ENCODE measurements at regions of chr1 and their contacts with region 1.

Region 1: DNA sequence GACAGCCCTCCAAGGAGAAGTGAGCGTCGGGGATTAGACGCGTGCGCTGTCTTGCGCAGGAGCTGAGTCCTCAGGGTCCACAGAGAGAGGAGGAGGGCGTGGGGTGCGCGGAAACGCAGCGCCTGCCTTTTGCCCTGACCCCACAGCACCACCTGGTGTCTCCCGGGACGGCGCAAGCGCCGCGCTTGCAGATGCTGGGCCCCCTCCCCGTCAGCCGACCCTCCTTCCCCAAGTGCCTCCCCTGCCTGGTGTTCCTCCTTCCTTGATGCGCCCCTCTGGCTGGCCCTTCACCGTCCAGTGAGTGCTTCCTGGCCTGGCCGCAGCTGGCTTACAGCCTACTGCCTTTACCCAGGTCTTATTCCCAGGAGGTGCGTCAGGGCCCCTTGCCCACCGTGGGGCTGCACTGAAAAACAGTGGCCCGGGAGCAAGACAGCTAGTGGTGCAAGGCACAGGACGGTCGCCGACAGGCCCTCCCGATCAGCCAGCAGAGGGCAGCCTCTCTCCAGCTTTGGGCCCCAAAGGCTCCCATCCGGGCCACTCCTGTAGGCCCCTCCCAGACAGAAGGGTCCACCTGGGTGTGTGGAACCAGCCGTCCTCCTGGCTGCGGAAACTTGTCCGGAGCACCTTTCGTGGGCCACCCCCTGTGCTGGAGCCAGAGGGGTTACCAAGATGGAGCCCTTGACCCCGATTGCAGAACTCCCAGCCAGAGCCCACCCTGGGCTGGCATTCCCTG is 12.9 kb upstream of the PHLDA3 start:
- DNase-seq: peak; percentile 73
- ATAC-seq: peak; percentile 76
- H3K4me3 Mint-ChIP-seq: peak overlapping the region; percentile 81
- H3K27ac Mint-ChIP-seq: no peak overlapping the region
- H3K4me1 Mint-ChIP-seq: peaks cover 29% of the 10 kb centered on the region
- H3K27me3 Mint-ChIP-seq: no peaks in the 10 kb centered on the region
- CTCF ChIP-seq: no peak

Region 2: GRCh38 chr1:201436393-201436792 is 45.5 kb before region 1 on chr1:
- CTCF ChIA-PET with region 1: interaction called, 3 read pairs
- POLR2A ChIA-PET with region 1: interaction called, 4 read pairs
- intact Hi-C with region 1: loop called (anchors 1 kb)
- DNase-seq: no peak
- ATAC-seq: no peak
- H3K4me3 Mint-ChIP-seq: no peak overlapping the region
- H3K27ac Mint-ChIP-seq: no peak overlapping the region
- H3K4me1 Mint-ChIP-seq: peaks cover 5% of the 10 kb centered on the region
- H3K27me3 Mint-ChIP-seq: peaks cover 31% of the 10 kb centered on the region
- CTCF ChIP-seq: no peak

Region 3: GRCh38 chr1:201447911-201448871 is 33.7 kb before region 1 on chr1:
- CTCF ChIA-PET with region 1: interaction called, 33 read pairs
- POLR2A ChIA-PET with region 1: interaction called, 4 read pairs
- intact Hi-C with region 1: loop called (anchors 1 kb)
- DNase-seq: peak; percentile 30
- ATAC-seq: peak; percentile 89
- H3K4me3 Mint-ChIP-seq: no peak overlapping the region
- H3K27ac Mint-ChIP-seq: no peak overlapping the region
- H3K4me1 Mint-ChIP-seq: peaks cover 9% of the 10 kb centered on the region
- H3K27me3 Mint-ChIP-seq: peaks cover 12% of the 10 kb centered on the region
- CTCF ChIP-seq: no peak

Region 4: GRCh38 chr1:201506556-201507359 is 24.8 kb after region 1 on chr1 and contains the start of gene CSRP1:
- CTCF ChIA-PET with region 1: interaction called, 219 read pairs
- POLR2A ChIA-PET with region 1: interaction called, 16 read pairs
- intact Hi-C with region 1: loop called (anchors 1 kb)
- DNase-seq: peak; percentile 66
- ATAC-seq: peak; percentile 96
- H3K4me3 Mint-ChIP-seq: peak within 1 kb of the TSS; percentile 88
- H3K27ac Mint-ChIP-seq: peak within 1 kb of the TSS; percentile 76
- H3K4me1 Mint-ChIP-seq: peaks cover 31% of the 10 kb centered on the region
- H3K27me3 Mint-ChIP-seq: no peaks in the 10 kb centered on the region
- CTCF ChIP-seq: no peak
- total RNA-seq, gene CSRP1: 29.0 and 29.5 TPM in 2 replicates

Region 5: DNA sequence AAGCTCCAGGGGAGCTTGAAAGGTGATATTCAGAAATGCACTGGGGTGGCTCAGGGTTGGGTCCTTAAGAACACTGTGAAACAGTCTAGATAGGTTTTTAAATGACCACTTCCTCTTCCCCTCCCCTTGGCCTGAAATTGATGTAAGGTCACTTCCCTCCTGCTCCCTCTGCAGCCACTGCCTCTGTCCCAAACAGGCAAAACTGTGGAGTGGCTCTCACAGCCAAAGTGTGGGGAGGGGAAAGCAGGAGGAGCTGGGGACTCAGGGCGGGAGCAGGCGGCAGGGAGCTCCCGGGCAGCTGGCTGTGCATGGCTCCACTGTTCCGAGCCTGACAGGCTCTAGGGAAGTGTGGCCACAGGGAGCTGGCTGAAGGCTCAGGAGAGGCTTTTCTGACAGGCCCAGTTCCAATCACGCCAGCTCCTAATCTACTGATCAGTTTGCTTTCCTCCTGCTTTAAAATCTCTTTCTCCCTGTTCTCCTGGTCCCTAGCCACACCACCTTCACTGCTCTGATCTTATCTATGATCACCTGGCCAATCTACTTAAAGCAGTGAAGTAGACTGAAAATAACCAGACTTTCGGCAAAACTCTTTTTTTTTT is 30.1 kb after region 1 on chr1:
- CTCF ChIA-PET with region 1: interaction called, 219 read pairs
- POLR2A ChIA-PET with region 1: interaction called, 16 read pairs
- intact Hi-C with region 1: loop called (anchors 1 kb)
- DNase-seq: no peak
- ATAC-seq: no peak
- H3K4me3 Mint-ChIP-seq: no peak overlapping the region
- H3K27ac Mint-ChIP-seq: no peak overlapping the region
- H3K4me1 Mint-ChIP-seq: peaks cover 19% of the 10 kb centered on the region
- H3K27me3 Mint-ChIP-seq: no peaks in the 10 kb centered on the region
- CTCF ChIP-seq: no peak

Region 6: DNA sequence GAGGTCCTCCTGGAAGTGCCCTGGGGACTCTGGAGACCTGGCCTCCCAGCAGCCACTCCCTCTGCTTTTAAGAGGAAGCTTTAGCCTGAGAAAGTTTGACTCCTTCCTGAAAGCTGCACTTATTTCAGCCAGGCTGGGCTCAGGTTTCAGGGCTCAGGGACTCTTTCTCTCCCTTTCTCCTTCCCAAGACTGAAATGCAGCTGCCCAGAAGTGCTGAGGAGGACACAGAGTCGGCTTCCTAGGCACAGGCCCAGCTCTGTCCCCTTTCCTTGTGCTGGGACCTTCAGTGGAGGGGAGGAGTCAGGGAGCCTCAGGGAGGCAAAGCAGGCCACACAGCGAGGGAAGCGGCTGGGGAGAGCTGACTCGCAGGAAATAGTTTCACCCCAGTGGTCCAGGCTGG is 194.3 kb after region 1 on chr1:
- CTCF ChIA-PET with region 1: no interaction called
- POLR2A ChIA-PET with region 1: no interaction called
- intact Hi-C with region 1: no loop called
- DNase-seq: no peak
- ATAC-seq: no peak
- H3K4me3 Mint-ChIP-seq: no peak overlapping the region
- H3K27ac Mint-ChIP-seq: no peak overlapping the region
- H3K4me1 Mint-ChIP-seq: no peaks in the 10 kb centered on the region
- H3K27me3 Mint-ChIP-seq: peaks cover 6% of the 10 kb centered on the region
- CTCF ChIP-seq: no peak

Region 7: DNA sequence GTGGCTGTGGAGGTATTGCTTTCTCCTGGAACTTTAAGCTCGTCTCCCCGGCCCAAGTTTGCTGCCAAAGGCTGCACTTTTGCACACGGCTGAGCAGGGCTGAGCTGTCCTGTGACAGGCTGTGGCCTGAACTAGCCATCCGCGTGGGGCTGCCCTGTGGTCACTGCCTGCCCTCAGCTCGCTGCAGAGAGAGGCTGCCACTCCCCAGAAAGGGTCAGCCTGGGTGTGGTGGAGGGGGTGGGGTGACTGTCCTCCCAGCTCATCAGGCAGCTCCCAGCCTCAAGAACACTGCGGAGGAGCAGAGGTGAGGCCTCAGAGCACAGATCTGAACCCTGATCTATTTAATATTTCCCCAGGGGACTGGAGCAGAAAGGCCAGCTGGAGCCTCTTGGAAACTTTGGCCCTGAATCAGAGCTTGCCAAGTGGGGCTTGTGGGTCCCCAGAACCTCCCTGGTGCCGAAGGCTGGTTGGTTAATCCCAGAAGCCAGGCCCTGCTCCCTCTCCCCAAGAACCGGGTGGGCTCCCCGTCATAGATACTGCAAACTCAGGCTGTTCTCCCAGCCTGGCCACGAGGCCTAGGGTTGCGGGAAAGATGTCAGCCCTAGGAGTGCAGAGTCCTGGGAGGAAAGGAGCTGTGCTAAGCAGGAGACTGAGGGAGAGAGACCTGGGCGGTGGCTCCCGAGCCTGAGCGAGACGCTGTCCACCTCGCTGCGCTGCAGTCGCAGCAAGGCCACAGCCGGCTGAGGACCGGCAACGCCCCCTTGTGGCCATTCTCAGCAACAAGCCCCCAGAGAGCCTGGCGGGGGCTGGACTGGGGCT is 221.9 kb after region 1 on chr1:
- CTCF ChIA-PET with region 1: no interaction called
- POLR2A ChIA-PET with region 1: no interaction called
- intact Hi-C with region 1: loop called (anchors 1 kb)
- DNase-seq: peak; percentile 38
- ATAC-seq: peak; percentile 61
- H3K4me3 Mint-ChIP-seq: no peak overlapping the region
- H3K27ac Mint-ChIP-seq: no peak overlapping the region
- H3K4me1 Mint-ChIP-seq: no peaks in the 10 kb centered on the region
- H3K27me3 Mint-ChIP-seq: peaks cover 7% of the 10 kb centered on the region
- CTCF ChIP-seq: no peak

Region 8: DNA sequence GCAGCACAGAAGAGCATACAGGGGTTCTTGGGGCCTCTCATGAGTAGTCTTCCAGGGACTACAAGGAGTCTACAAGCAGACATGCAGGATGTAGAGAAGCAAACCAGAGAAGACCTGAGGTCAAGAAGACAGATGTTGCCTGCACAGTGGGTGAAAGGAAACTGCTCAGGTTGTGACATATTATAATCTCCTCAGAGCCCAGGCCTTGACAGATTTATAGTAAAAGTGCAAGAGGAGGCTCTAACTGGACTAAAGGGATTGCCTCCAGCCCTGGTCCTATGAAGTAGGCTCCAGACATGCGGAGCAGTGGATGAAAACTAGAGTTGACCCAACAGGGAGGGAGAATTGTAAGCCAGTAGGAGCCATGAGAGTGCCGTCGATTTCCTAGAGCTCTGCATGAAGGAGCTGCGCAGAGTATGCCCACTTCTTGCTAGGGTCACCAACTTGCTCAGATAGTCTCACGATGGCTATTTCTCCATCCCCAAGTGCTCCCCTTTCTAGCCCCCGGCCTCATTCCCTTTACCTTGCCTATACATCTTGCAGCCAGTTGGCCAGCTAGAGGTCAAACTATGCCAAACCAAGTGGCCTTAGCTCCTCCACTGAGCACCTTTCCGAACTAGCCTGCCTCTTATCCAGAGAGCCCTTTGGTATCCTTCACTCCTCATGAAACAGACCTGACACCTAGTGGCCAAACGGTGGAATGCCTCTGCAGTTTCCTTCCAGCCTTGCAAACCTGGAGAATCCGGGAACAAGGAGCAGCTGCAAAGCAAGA is 310.8 kb after region 1 on chr1:
- CTCF ChIA-PET with region 1: no interaction called
- POLR2A ChIA-PET with region 1: no interaction called
- intact Hi-C with region 1: loop called (anchors 1 kb)
- DNase-seq: peak; percentile 24
- ATAC-seq: peak; percentile 54
- H3K4me3 Mint-ChIP-seq: no peak overlapping the region
- H3K27ac Mint-ChIP-seq: no peak overlapping the region
- H3K4me1 Mint-ChIP-seq: peaks cover 3% of the 10 kb centered on the region
- H3K27me3 Mint-ChIP-seq: no peaks in the 10 kb centered on the region
- CTCF ChIP-seq: peak; percentile 63